Naive thymus-derived CD4-positive, alpha-beta T cell (primary cell): ENCODE measurements at regions of chr9 and their contacts with region 1.

Region 1: GRCh38 chr9:99819856-99820684 is 1.6 kb upstream of the NR4A3 start:
- DNase-seq: peak; percentile 89 to 97 (median 94)
- ATAC-seq: peak; percentile 78
- H3K4me3 ChIP-seq: peak overlapping the region; percentile 85
- H3K4me3 Mint-ChIP-seq: peak overlapping the region; percentile 87 to 98 (median 96)
- H3K27ac ChIP-seq: peak overlapping the region; percentile 95
- H3K27ac Mint-ChIP-seq: peak overlapping the region; percentile 75 to 100 (median 99)
- H3K4me1 ChIP-seq: peaks cover 25 to 44% of the 10 kb centered on the region in 2 donors
- H3K4me1 Mint-ChIP-seq: peaks cover 24 to 54% (median 48%) of the 10 kb centered on the region in 7 donors
- H3K27me3 ChIP-seq: peaks cover 6 to 21% of the 10 kb centered on the region in 2 donors
- H3K27me3 Mint-ChIP-seq: peaks cover 19 to 67% (median 29%) of the 10 kb centered on the region in 5 donors

Region 2: DNA sequence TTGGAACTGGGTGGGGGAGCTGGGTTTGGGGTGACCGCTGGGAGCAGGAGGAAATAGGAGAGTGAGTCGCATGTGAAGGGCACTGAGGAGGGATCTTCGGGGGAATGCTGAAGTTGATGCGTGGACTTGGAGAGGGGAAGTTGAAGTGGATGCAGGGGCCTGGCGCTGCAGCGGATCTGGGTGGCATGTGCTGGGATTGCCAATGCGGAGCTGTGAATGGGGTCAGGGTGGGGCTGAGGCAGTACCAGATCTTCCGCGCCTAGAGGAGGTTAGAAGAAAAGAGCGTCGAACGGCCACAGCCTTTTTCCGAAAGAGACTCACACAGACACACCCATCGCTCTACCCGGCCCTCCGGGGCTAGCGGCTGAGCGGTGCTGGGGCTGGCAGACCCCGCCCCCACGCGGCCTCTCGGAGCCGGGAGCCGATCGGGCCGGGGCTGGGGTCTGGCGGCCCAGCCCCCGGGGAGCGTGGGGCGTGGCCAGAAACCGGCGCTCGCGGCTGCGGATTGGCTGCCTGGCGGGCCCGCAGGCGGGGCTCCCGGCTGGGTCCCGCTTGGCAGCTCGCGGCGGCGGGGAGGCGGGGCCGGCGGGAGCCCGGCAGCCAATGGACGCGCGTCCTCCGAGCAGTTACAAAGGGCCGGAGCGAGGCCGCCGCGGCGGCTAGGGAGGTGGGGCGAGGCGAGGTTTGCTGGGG is 715.5 kb before region 1 on chr9 and contains the start of gene TGFBR1:
- CTCF ChIA-PET with region 1: no interaction called
- POLR2A ChIA-PET with region 1: no interaction called
- intact Hi-C with region 1: loop called (anchors 2 to 5 kb)
- DNase-seq: peak; percentile 87 to 98 (median 89)
- ATAC-seq: peak; percentile 91
- H3K4me3 ChIP-seq: peak within 1 kb of the TSS; percentile 73
- H3K4me3 Mint-ChIP-seq: peak within 1 kb of the TSS; percentile 90 to 97 (median 94)
- H3K27ac ChIP-seq: peak within 1 kb of the TSS; percentile 74
- H3K27ac Mint-ChIP-seq: peak within 1 kb of the TSS; percentile 78 to 99 (median 95)
- H3K4me1 ChIP-seq: peaks cover 43 to 49% of the 10 kb centered on the region in 2 donors
- H3K4me1 Mint-ChIP-seq: peaks cover 36 to 65% (median 59%) of the 10 kb centered on the region in 7 donors
- H3K27me3 ChIP-seq: no peaks in the 10 kb centered on the region
- H3K27me3 Mint-ChIP-seq: no peaks in the 10 kb centered on the region
- total RNA-seq, gene TGFBR1: 20.6 to 95.5 (median 29.5) TPM

Region 3: GRCh38 chr9:99807276-99807852 is 12.7 kb before region 1 on chr9:
- CTCF ChIA-PET with region 1: interaction called, 4 read pairs
- POLR2A ChIA-PET with region 1: interaction called, 3 read pairs
- intact Hi-C with region 1: loop called (anchors 1 kb)
- DNase-seq: peak in 8 of 9 donors; percentile 31 to 76 (median 68)
- ATAC-seq: peak; percentile 89
- H3K4me3 ChIP-seq: no peak overlapping the region
- H3K4me3 Mint-ChIP-seq: no peak overlapping the region
- H3K27ac ChIP-seq: no peak overlapping the region
- H3K27ac Mint-ChIP-seq: peak overlapping the region in 4 of 9 donors; percentile 1 to 63 (median 12)
- H3K4me1 ChIP-seq: peaks cover 0 to 5% of the 10 kb centered on the region in 2 donors
- H3K4me1 Mint-ChIP-seq: peaks cover 0 to 23% (median 4%) of the 10 kb centered on the region in 7 donors
- H3K27me3 ChIP-seq: no peaks in the 10 kb centered on the region
- H3K27me3 Mint-ChIP-seq: peaks cover 0 to 12% (median 0%) of the 10 kb centered on the region in 5 donors

Region 4: GRCh38 chr9:99954819-99955218 is 134.7 kb after region 1 on chr9:
- CTCF ChIA-PET with region 1: no interaction called
- POLR2A ChIA-PET with region 1: no interaction called
- intact Hi-C with region 1: loop called in 1 of 2 experiments (anchors 5 kb)
- DNase-seq: no peak
- ATAC-seq: no peak
- H3K4me3 ChIP-seq: no peak overlapping the region
- H3K4me3 Mint-ChIP-seq: peak overlapping the region in 1 of 10 donors; percentile 6
- H3K27ac ChIP-seq: no peak overlapping the region
- H3K27ac Mint-ChIP-seq: peak overlapping the region in 4 of 9 donors; percentile 11 to 64 (median 46)
- H3K4me1 ChIP-seq: no peaks in the 10 kb centered on the region
- H3K4me1 Mint-ChIP-seq: peaks cover 5 to 32% (median 27%) of the 10 kb centered on the region in 7 donors
- H3K27me3 ChIP-seq: no peaks in the 10 kb centered on the region
- H3K27me3 Mint-ChIP-seq: no peaks in the 10 kb centered on the region

Region 5: DNA sequence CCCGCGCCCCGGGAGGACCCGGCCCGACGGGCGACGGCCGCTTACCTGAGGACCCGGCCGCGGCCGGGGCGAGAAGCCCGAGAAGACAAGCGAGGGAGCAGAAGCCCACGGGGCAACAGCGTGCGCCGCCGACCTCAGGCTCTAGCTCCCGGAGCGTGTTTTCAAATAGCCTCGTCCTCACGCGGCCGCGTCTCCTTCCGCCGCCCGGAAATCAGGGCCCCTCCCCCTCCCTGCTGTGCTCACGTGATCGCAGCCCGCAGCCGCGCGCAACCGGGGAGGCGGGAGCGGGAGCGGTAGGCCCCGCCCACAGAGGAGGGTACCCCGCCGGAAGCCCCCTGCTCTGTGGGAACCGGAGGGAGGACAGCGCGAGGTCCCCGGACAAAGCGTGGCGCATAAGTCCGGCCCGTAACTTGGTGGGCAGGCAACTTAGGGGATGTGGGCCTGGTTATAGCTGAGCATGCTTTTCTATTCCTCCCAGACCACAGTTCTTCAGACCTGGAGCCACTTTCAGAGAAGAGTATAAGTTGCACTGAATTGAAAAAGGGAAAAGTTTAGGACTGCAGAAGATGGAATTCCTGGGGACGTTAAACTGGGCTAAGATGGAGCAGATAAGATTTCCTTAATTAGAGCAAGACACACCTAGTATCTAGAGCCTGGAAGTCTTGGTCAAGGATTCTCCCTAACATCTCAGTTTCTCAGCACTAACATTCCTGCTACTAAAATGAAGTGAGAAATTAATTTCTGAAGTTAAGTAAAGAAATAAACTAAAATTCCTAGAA is 532.8 kb after region 1 on chr9 and contains the start of gene TEX10:
- CTCF ChIA-PET with region 1: no interaction called
- POLR2A ChIA-PET with region 1: no interaction called
- intact Hi-C with region 1: loop called (anchors 1 to 2 kb)
- DNase-seq: peak; percentile 80 to 94 (median 87)
- ATAC-seq: peak; percentile 96
- H3K4me3 ChIP-seq: peak within 1 kb of the TSS; percentile 79
- H3K4me3 Mint-ChIP-seq: peak within 1 kb of the TSS; percentile 87 to 99 (median 94)
- H3K27ac ChIP-seq: peak within 1 kb of the TSS; percentile 82
- H3K27ac Mint-ChIP-seq: peak within 1 kb of the TSS; percentile 77 to 94 (median 86)
- H3K4me1 ChIP-seq: peaks cover 8 to 22% of the 10 kb centered on the region in 2 donors
- H3K4me1 Mint-ChIP-seq: peaks cover 32 to 62% (median 53%) of the 10 kb centered on the region in 7 donors
- H3K27me3 ChIP-seq: no peaks in the 10 kb centered on the region
- H3K27me3 Mint-ChIP-seq: no peaks in the 10 kb centered on the region
- total RNA-seq, gene TEX10: 11.0 to 24.6 (median 18.2) TPM

Region 6: GRCh38 chr9:101398068-101398929 is 1578.2 kb after region 1 on chr9 and contains the starts of genes MRPL50 and ZNF189:
- CTCF ChIA-PET with region 1: no interaction called
- POLR2A ChIA-PET with region 1: no interaction called
- intact Hi-C with region 1: loop called in 1 of 2 experiments (anchors 1 kb)
- DNase-seq: peak; percentile 81 to 99 (median 96)
- ATAC-seq: peak; percentile 97
- H3K4me3 ChIP-seq: peak within 1 kb of the TSS; percentile 90
- H3K4me3 Mint-ChIP-seq: peak within 1 kb of the TSS; percentile 93 to 100 (median 98)
- H3K27ac ChIP-seq: peak within 1 kb of the TSS; percentile 94
- H3K27ac Mint-ChIP-seq: peak within 1 kb of the TSS; percentile 97 to 100 (median 99)
- H3K4me1 ChIP-seq: peaks cover 21 to 34% of the 10 kb centered on the region in 2 donors
- H3K4me1 Mint-ChIP-seq: peaks cover 53 to 90% (median 83%) of the 10 kb centered on the region in 7 donors
- H3K27me3 ChIP-seq: no peaks in the 10 kb centered on the region
- H3K27me3 Mint-ChIP-seq: no peaks in the 10 kb centered on the region
- total RNA-seq, gene MRPL50: 6.5 to 23.8 (median 11.5) TPM
- total RNA-seq, gene ZNF189: 8.5 to 25.0 (median 14.5) TPM